Gastrocnemius medialis (tissue), 4 donors: ENCODE measurements at regions of chr1 and their contacts with region 1.

Region 1: DNA sequence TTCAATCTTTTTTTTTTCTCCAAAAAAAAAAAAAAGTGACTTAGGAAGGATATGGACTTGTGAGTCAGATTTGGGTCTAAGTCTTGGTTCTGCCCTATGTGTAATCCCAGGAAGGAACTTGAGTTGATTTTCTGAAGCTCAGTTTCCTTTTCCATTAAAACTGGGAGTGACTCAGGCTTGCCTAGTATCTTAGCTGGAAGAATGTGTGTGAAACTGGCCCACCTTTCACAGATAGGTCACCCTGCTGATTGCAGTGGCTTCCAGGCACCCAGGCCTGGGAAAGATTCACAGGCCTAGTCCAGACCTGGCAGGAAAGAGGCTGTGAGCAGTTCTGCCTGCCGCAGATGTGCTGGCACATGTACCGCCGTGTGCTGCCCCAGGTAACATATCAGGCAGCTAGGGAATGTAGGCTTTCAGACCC is 218.3 kb upstream of the HOOK1 start:
- DNase-seq: peak in 1 of 2 donors; percentile 59
- ATAC-seq: peak; percentile 8 to 31
- H3K4me3 ChIP-seq: no peak overlapping the region
- H3K27ac ChIP-seq: peak overlapping the region; percentile 84 to 91 (median 86)
- H3K4me1 ChIP-seq: peaks cover 62 to 75% of the 10 kb centered on the region in 2 donors
- H3K27me3 ChIP-seq: no peaks in the 10 kb centered on the region
- CTCF ChIP-seq: no peak
- POLR2A ChIP-seq: no peak

Region 2: DNA sequence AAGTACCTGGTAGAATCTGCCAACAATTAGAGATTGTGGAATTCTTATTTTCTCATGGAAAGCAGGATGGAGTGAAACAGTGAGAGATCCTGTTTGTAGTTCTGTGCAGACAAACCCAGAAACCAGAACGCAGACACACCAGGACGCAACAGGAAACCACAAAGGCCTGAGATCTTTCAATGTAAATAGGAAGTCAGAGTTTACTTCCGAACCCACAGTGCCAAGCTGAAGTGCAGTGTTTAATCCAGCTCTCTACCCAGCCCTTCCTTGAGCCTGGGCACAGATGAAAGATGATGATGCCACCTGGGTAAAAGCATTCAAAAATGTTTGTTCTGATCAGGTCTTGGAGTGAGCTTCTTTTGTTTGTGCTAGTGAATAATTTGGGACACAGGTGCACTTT is 25.9 kb before region 1 on chr1:
- in situ Hi-C with region 1: no loop called
- intact Hi-C with region 1: no loop called
- DNase-seq: no peak
- ATAC-seq: no peak
- H3K4me3 ChIP-seq: no peak overlapping the region
- H3K27ac ChIP-seq: no peak overlapping the region
- H3K4me1 ChIP-seq: no peaks in the 10 kb centered on the region
- H3K27me3 ChIP-seq: no peaks in the 10 kb centered on the region
- CTCF ChIP-seq: no peak
- POLR2A ChIP-seq: no peak

Region 3: DNA sequence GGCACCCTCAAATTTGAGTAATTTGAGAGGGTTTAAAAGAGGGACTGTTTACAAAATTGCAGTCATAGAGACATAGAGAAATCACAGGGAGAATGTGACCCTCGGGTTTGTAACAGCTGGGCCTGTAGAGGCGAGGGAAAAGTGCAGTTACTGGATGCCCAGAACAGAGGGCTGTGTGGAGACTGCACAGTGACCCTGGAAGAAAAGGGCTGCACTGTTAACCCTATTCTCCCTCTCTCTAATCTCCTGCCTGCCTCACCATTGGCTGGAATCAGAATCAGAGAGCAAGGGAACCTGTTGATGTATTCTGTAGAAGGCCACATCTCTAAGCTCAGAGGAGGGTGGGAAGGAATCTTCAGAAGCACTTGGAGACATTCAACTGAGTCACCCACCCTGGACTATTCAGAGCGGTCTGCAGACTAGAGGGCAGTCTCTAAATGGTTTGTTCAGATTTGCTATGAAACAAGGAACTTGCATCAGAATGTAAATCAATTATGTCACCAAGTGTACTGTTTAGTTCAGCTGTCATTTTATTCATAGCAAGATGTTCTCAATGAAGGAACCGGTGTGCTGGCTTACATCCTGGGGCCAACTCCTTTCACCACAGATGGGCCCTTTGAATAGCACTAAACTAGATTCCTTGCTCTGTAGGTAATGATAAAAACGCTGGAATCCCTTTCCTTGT is 86.1 kb after region 1 on chr1:
- in situ Hi-C with region 1: loop called in 1 of 4 experiments (anchors 10 kb)
- intact Hi-C with region 1: no loop called
- DNase-seq: peak; percentile 62 to 76
- ATAC-seq: peak; percentile 65 to 73
- H3K4me3 ChIP-seq: no peak overlapping the region
- H3K27ac ChIP-seq: peak overlapping the region; percentile 85 to 89 (median 87)
- H3K4me1 ChIP-seq: peaks cover 57 to 77% of the 10 kb centered on the region in 2 donors
- H3K27me3 ChIP-seq: no peaks in the 10 kb centered on the region
- CTCF ChIP-seq: no peak
- POLR2A ChIP-seq: peak in 1 of 2 donors; percentile 60

Region 4: GRCh38 chr1:59692591-59692990 is 96.1 kb after region 1 on chr1:
- in situ Hi-C with region 1: loop called in 1 of 4 experiments (anchors 10 kb)
- intact Hi-C with region 1: loop called (anchors 2 kb)
- DNase-seq: no peak
- ATAC-seq: no peak
- H3K4me3 ChIP-seq: no peak overlapping the region
- H3K27ac ChIP-seq: peak overlapping the region; percentile 85 to 89 (median 87)
- H3K4me1 ChIP-seq: peaks cover 60 to 63% of the 10 kb centered on the region in 2 donors
- H3K27me3 ChIP-seq: no peaks in the 10 kb centered on the region
- CTCF ChIP-seq: no peak
- POLR2A ChIP-seq: no peak